ENCODE measurements at regions of chr12 and their contacts with region 1.

Region 1: GRCh38 chr12:123388177-123388947 is 4.4 kb downstream of the KMT5A start:
- DNase-seq: peak; percentile 86 to 97 (median 90)
- ATAC-seq: peak; percentile 48
- H3K4me3 ChIP-seq: peak overlapping the region; percentile 42
- H3K27ac ChIP-seq: peak overlapping the region; percentile 93
- H3K4me1 ChIP-seq: peaks cover 36 to 50% of the 10 kb centered on the region in 2 experiments
- H3K27me3 ChIP-seq: no peaks in the 10 kb centered on the region
- CTCF ChIP-seq: peak in 1 of 3 experiments; percentile 0; a peak in 1 of 6 replicates
- EP300 ChIP-seq: peak; percentile 97
- POLR2A ChIP-seq: peak; percentile 63; the same call in 1 of the 2 replicates
- RAD21 ChIP-seq: no peak

Region 2: DNA sequence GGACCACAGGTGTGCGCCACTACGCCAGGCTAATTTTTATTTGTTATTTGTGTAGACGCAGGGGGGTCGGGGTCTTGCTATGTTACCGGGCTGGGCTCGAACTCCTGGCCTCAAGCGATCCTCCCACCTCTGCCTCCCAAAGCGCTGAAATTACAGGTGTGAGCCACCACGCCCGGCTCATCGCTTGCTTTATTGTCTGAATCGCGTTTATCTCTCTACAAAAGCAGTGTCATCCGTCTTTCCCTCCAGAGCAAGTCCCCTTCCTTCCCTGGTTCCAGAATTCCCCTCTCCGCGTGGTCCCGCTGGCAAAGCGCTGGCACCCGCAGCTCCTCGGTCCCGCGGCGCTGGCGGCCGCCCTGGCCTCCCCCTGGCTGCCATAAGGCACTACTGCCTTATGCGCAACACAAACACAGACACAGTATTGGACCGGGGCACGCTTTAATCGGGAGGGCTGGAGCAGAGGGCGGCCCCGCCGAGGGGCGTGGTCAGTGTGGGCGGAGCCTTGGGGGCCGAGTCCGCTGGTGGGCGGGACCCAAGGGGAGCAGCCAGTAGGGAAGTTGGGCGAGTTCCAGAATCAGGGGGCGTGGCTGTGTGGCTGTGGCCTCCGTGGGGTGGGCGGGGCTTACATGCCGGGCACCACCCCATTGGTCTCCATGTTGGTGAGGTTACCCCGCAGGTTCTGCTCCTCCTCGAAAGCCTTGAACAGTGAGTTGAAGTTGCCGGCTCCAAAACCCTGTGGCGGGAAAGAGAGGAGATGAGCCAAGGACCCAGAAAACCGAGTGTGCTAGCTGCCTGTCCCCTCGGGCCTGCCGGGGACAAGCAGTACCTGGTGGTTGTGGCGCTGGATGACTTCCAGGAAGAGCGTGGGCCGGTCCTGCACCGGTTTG is 1549.0 kb before region 1 on chr12:
- CTCF ChIA-PET with region 1: no interaction called
- POLR2A ChIA-PET with region 1: no interaction called
- in situ Hi-C with region 1: loop called (anchors 25 kb)
- intact Hi-C with region 1: no loop called
- DNase-seq: peak; percentile 99 to 100 (median 100)
- ATAC-seq: peak; percentile 97
- H3K4me3 ChIP-seq: peak overlapping the region; percentile 75
- H3K27ac ChIP-seq: peak overlapping the region; percentile 89
- H3K4me1 ChIP-seq: peaks cover 18 to 30% of the 10 kb centered on the region in 2 experiments
- H3K27me3 ChIP-seq: no peaks in the 10 kb centered on the region
- CTCF ChIP-seq: peak; percentile 58 to 77 (median 63); a peak in 5 of 6 replicates
- EP300 ChIP-seq: no peak
- POLR2A ChIP-seq: peak; percentile 91
- RAD21 ChIP-seq: no peak; a peak in 2 of 4 replicates

Region 3: GRCh38 chr12:123365025-123365917 is 23.1 kb before region 1 on chr12:
- CTCF ChIA-PET with region 1: no interaction called
- POLR2A ChIA-PET with region 1: interaction called, 151 read pairs
- in situ Hi-C with region 1: no loop called
- intact Hi-C with region 1: loop called (anchors 1 kb)
- DNase-seq: peak; percentile 95 to 99 (median 97)
- ATAC-seq: peak; percentile 83
- H3K4me3 ChIP-seq: peak overlapping the region; percentile 93
- H3K27ac ChIP-seq: peak overlapping the region; percentile 98
- H3K4me1 ChIP-seq: peaks cover 20 to 31% of the 10 kb centered on the region in 2 experiments
- H3K27me3 ChIP-seq: no peaks in the 10 kb centered on the region
- CTCF ChIP-seq: peak; percentile 70 to 89 (median 83)
- EP300 ChIP-seq: peak; percentile 1; the same call in 1 of the 2 replicates
- POLR2A ChIP-seq: peak; percentile 89
- RAD21 ChIP-seq: peak; percentile 46 to 62

Region 4: GRCh38 chr12:123398550-123399254 is 10.3 kb after region 1 on chr12:
- CTCF ChIA-PET with region 1: no interaction called
- POLR2A ChIA-PET with region 1: interaction called, 20 read pairs
- in situ Hi-C with region 1: no loop called
- intact Hi-C with region 1: no loop called
- DNase-seq: no peak
- ATAC-seq: no peak; the same call in 1 of the 3 replicates
- H3K4me3 ChIP-seq: no peak overlapping the region
- H3K27ac ChIP-seq: no peak overlapping the region; the same call in 2 of the 3 replicates
- H3K4me1 ChIP-seq: peaks cover 0 to 12% of the 10 kb centered on the region in 2 experiments; a peak in 2 of 5 replicates
- H3K27me3 ChIP-seq: no peaks in the 10 kb centered on the region
- CTCF ChIP-seq: no peak
- EP300 ChIP-seq: no peak
- POLR2A ChIP-seq: no peak
- RAD21 ChIP-seq: no peak

Region 5: DNA sequence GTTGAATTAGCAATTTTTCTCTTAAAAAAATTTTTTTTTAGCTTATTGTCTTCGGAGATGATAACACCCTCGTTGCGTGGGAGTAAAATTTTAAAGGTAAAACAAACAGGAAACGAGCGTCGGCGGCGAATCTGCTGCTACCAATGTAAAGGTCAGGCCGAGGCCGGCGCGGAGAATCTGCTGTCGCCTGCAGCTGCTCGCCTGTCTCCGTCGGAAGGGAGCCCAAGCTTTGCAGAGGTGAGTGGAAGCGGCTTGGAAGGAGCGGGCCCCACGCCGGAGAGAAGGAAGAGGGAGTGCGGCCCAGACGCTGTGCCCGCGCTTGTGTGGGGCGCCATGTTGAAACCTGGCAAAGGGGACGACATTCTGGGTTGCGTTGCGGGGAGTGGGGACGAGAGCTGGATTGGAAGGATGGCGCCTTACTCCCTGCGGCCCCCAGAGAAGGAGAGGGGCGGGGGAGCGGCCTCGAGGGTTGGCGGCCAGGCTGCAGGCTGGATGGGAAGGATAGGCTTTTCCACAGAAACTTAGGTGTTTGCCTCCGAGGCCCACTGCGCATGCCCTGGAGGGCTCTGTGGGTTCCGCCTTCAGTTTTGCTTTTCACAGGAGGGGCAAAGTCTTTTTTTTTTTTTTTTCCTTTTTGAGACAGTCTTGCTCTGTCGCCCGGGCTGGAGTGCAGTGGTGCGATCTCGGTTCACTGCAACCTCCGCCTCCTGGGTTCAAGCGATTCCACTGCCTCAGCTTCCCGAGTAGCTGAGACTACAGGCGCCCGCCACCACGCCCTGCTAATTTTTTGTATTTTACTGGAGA is 69.8 kb after region 1 on chr12 and contains the start of gene SNRNP35:
- CTCF ChIA-PET with region 1: no interaction called
- POLR2A ChIA-PET with region 1: interaction called, 10 read pairs
- in situ Hi-C with region 1: no loop called
- intact Hi-C with region 1: loop called (anchors 2 kb)
- DNase-seq: peak; percentile 75 to 91 (median 77)
- ATAC-seq: peak; percentile 87
- H3K4me3 ChIP-seq: peak within 1 kb of the TSS; percentile 75
- H3K27ac ChIP-seq: peak within 1 kb of the TSS; percentile 97
- H3K4me1 ChIP-seq: peaks cover 7 to 11% of the 10 kb centered on the region in 2 experiments
- H3K27me3 ChIP-seq: no peaks in the 10 kb centered on the region
- CTCF ChIP-seq: no peak
- EP300 ChIP-seq: peak; percentile 100
- POLR2A ChIP-seq: peak; percentile 94
- RAD21 ChIP-seq: no peak
- polyA plus RNA-seq, gene SNRNP35: 19.5 to 41.0 TPM

Region 6: GRCh38 chr12:123546281-123546680 is 157.9 kb after region 1 on chr12:
- CTCF ChIA-PET with region 1: no interaction called
- POLR2A ChIA-PET with region 1: no interaction called
- in situ Hi-C with region 1: no loop called
- intact Hi-C with region 1: no loop called
- DNase-seq: peak in 1 of 4 experiments; percentile 29
- ATAC-seq: peak; percentile 67
- H3K4me3 ChIP-seq: no peak overlapping the region
- H3K27ac ChIP-seq: no peak overlapping the region
- H3K4me1 ChIP-seq: peaks cover 0 to 3% of the 10 kb centered on the region in 2 experiments; a peak in 1 of 5 replicates
- H3K27me3 ChIP-seq: peaks cover 0 to 4% of the 10 kb centered on the region in 2 experiments; a peak in 1 of 5 replicates
- CTCF ChIP-seq: no peak
- EP300 ChIP-seq: no peak
- POLR2A ChIP-seq: no peak
- RAD21 ChIP-seq: no peak

Region 7: GRCh38 chr12:123580772-123581171 is 192.4 kb after region 1 on chr12:
- CTCF ChIA-PET with region 1: no interaction called
- POLR2A ChIA-PET with region 1: interaction called, 15 read pairs
- in situ Hi-C with region 1: no loop called
- intact Hi-C with region 1: loop called (anchors 2 kb)
- DNase-seq: no peak
- ATAC-seq: no peak
- H3K4me3 ChIP-seq: no peak overlapping the region
- H3K27ac ChIP-seq: no peak overlapping the region
- H3K4me1 ChIP-seq: peaks cover 11 to 12% of the 10 kb centered on the region in 2 experiments
- H3K27me3 ChIP-seq: no peaks in the 10 kb centered on the region
- CTCF ChIP-seq: no peak
- EP300 ChIP-seq: no peak
- POLR2A ChIP-seq: no peak
- RAD21 ChIP-seq: no peak

Region 8: DNA sequence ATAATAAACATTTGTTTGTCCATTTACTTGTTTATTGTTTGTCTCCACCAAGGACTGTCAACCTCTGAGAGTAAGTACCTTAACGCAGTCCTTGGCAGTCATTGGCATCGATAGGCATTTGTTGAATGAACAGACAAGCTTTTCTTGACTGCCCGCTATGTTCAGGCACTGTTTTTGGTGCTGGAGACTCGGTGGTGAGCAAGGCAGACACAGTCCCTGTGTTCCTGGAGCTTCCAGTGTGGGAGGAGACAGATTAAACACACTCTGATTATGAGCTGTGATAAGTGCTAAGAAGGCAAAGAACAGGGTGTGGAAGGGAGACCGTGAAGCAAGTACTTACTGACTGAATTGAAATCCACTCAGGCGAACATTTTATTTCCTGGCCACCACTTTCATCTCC is 325.0 kb after region 1 on chr12:
- CTCF ChIA-PET with region 1: no interaction called
- POLR2A ChIA-PET with region 1: no interaction called
- in situ Hi-C with region 1: no loop called
- intact Hi-C with region 1: loop called (anchors 10 kb)
- DNase-seq: peak in 3 of 4 experiments; percentile 30 to 80 (median 65)
- ATAC-seq: peak; percentile 50
- H3K4me3 ChIP-seq: peak overlapping the region; percentile 95
- H3K27ac ChIP-seq: peak overlapping the region; percentile 80
- H3K4me1 ChIP-seq: peaks cover 29 to 31% of the 10 kb centered on the region in 2 experiments
- H3K27me3 ChIP-seq: no peaks in the 10 kb centered on the region
- CTCF ChIP-seq: no peak
- EP300 ChIP-seq: peak; percentile 33
- POLR2A ChIP-seq: 0 out of 2 replicates have a peak, but pooled peaks have one; percentile 26
- RAD21 ChIP-seq: no peak